B cell (primary cell): ENCODE measurements at regions of chr10 and their contacts with region 1.

Region 1: GRCh38 chr10:80444646-80445319 is 9.3 kb upstream of the TSPAN14 start:
- DNase-seq: peak; percentile 80
- ATAC-seq: peak; percentile 88
- H3K4me3 ChIP-seq: no peak overlapping the region
- H3K4me3 Mint-ChIP-seq: no peak overlapping the region
- H3K27ac ChIP-seq: no peak overlapping the region
- H3K27ac Mint-ChIP-seq: no peak overlapping the region
- H3K4me1 ChIP-seq: peaks cover 0 to 6% of the 10 kb centered on the region in 2 donors
- H3K4me1 Mint-ChIP-seq: peaks cover 9% of the 10 kb centered on the region
- H3K27me3 ChIP-seq: no peaks in the 10 kb centered on the region
- H3K27me3 Mint-ChIP-seq: no peaks in the 10 kb centered on the region
- CTCF ChIP-seq: peak; percentile 58

Region 2: GRCh38 chr10:80421707-80422536 is 22.9 kb before region 1 on chr10:
- CTCF ChIA-PET with region 1: interaction called, 19 read pairs
- POLR2A ChIA-PET with region 1: no interaction called
- intact Hi-C with region 1: no loop called
- DNase-seq: peak; percentile 50
- ATAC-seq: peak; percentile 78
- H3K4me3 ChIP-seq: peak overlapping the region in 1 of 5 experiments; percentile 29
- H3K4me3 Mint-ChIP-seq: peak overlapping the region; percentile 15
- H3K27ac ChIP-seq: no peak overlapping the region
- H3K27ac Mint-ChIP-seq: peak overlapping the region; percentile 53
- H3K4me1 ChIP-seq: peaks cover 24 to 31% of the 10 kb centered on the region in 2 donors
- H3K4me1 Mint-ChIP-seq: peaks cover 30% of the 10 kb centered on the region
- H3K27me3 ChIP-seq: no peaks in the 10 kb centered on the region
- H3K27me3 Mint-ChIP-seq: no peaks in the 10 kb centered on the region
- CTCF ChIP-seq: no peak

Region 3: DNA sequence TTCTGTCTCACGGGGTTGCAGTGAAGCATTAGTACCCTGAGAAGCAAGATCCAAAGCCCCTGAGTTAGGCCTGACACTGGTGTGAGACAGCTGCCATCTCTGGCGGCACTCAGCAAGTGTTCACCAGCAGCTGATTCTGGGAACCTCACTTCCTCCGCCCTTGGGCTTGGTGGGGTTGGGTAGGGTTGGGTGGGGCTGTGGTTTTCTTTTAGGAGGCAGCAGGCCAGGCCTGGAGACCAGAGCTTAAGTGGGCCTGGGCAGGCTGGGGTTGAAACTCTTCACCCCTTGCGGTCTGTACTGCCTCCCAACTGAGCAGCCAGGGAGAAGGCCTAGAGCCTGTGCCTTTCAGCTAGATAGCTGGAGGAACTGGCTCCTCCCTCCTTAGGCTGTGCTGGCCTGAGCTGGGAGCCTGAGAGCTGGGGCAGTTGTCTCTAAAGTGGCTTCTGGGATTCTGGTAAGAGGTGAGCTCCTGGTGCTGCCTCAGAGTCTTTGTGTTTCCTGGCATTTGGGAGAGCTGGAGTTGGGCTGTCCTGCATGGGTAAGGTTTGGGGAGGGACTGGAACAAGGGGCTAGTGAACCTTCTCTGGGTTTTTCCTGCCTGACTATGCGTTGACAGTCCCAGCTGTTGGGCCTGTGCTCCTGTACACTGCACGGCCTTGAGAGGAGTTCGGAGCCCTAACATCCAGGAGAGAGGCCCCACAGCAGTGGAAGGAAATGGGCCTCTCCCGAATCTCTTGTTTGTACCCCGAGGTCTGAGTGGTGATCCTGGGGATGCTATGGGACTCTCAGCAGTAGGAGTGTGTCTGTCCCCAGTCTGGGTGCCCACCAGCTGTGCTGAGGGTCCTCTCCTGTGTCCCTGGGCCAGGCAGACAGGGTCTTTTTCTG is 14.5 kb after region 1 on chr10:
- CTCF ChIA-PET with region 1: interaction called, 26 read pairs
- POLR2A ChIA-PET with region 1: interaction called, 3 read pairs
- intact Hi-C with region 1: no loop called
- DNase-seq: peak; percentile 66
- ATAC-seq: peak; percentile 11
- H3K4me3 ChIP-seq: peak overlapping the region in 3 of 5 experiments; percentile 8 to 34 (median 12)
- H3K4me3 Mint-ChIP-seq: peak overlapping the region; percentile 68
- H3K27ac ChIP-seq: peak overlapping the region; percentile 48 to 58
- H3K27ac Mint-ChIP-seq: peak overlapping the region; percentile 90
- H3K4me1 ChIP-seq: peaks cover 85 to 94% of the 10 kb centered on the region in 2 donors
- H3K4me1 Mint-ChIP-seq: peaks cover 89% of the 10 kb centered on the region
- H3K27me3 ChIP-seq: no peaks in the 10 kb centered on the region
- H3K27me3 Mint-ChIP-seq: no peaks in the 10 kb centered on the region
- CTCF ChIP-seq: no peak

Region 4: DNA sequence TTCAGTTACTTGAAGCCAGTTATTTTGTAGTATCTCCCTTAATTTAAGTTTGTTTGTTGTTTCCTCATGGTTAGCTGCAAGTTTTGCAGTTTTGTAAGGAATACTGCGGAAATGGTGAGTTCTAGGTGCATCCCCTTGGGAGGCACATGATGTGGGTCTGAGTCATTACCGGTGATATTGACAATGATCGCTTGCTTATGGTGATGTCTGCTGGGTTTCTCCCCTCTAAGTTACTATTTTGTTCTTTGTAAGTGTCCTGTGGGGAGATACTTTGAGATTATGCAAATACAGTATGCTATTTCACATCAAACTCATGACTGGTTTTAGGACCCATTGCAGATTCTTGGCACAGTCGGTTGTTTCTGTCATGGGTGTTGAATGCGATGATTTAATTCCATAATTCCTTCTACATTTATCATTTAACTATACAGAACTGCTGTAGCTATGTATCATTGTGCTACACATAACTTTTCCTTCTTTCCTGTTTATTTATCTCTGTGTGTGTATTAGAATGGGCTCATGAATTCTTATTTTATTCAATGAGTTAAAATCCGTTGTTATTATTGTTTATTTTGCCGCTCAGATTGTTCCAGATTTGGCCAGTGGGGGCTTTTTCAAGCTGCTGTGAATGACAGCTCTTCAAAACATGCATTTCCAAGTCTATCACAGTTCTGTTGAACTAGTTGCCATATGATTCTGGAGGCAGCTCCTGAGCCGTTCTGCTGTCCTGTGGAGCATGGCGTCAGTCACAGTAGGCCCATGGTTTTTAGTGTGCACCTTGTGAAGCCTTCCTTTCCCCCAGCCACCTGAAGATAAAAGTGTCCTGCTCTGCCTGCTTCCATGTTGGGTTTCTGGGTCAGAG is 27.7 kb after region 1 on chr10:
- CTCF ChIA-PET with region 1: interaction called, 16 read pairs
- POLR2A ChIA-PET with region 1: interaction called, 8 read pairs
- intact Hi-C with region 1: no loop called
- DNase-seq: peak; percentile 63
- ATAC-seq: peak; percentile 88
- H3K4me3 ChIP-seq: no peak overlapping the region
- H3K4me3 Mint-ChIP-seq: peak overlapping the region; percentile 60
- H3K27ac ChIP-seq: peak overlapping the region; percentile 49 to 75
- H3K27ac Mint-ChIP-seq: peak overlapping the region; percentile 89
- H3K4me1 ChIP-seq: peaks cover 41 to 48% of the 10 kb centered on the region in 2 donors
- H3K4me1 Mint-ChIP-seq: peaks cover 61% of the 10 kb centered on the region
- H3K27me3 ChIP-seq: no peaks in the 10 kb centered on the region
- H3K27me3 Mint-ChIP-seq: no peaks in the 10 kb centered on the region
- CTCF ChIP-seq: no peak

Region 5: DNA sequence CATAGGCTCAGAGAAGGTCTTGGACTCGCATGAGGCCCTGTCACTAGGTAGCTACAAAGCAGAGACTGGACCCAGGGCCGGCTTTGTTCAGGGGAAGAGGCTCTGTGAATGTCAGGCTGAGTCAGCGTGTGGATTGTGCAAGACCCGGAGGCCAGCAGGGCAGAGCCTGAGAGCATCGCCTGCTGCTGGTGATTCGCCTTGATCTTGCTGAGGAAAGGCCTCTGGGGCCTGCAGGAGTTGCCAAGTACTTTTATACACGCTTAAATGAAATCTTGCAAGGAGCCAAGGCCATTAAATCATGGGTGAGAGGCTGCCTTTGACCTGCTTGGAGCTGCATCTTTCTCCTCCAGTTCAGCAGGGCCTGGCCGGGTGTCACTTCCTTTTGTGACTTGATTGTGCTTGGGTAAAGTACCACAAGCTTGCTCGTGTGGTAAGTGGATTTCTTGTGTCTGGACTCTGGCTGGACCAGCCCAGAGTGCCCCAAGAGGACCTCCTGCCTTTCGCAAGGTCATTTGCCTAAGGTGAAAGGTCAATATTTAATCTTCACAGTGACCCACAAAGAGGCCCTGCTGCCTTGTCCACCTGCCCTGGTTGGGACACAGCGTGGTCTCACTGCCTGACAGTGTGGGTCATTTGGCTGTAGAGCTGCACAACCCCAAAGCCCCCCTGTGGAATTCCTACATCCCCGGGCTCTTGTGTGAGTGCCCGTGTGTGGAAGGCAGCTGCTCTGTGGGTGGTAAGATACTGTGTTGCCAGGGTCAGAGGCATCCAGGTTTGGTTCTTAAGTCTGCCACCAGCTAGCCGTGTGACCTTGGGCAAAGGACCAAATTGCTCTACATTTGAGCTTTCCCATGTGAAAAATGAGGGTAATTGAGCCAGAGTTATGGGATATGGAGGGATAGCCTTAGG is 54.3 kb after region 1 on chr10:
- CTCF ChIA-PET with region 1: interaction called, 500 read pairs
- POLR2A ChIA-PET with region 1: no interaction called
- intact Hi-C with region 1: no loop called
- DNase-seq: peak; percentile 32
- ATAC-seq: no peak
- H3K4me3 ChIP-seq: no peak overlapping the region
- H3K4me3 Mint-ChIP-seq: peak overlapping the region; percentile 89
- H3K27ac ChIP-seq: peak overlapping the region; percentile 44 to 59
- H3K27ac Mint-ChIP-seq: peak overlapping the region; percentile 95
- H3K4me1 ChIP-seq: peaks cover 51 to 70% of the 10 kb centered on the region in 2 donors
- H3K4me1 Mint-ChIP-seq: peaks cover 69% of the 10 kb centered on the region
- H3K27me3 ChIP-seq: no peaks in the 10 kb centered on the region
- H3K27me3 Mint-ChIP-seq: no peaks in the 10 kb centered on the region
- CTCF ChIP-seq: no peak

Region 6: DNA sequence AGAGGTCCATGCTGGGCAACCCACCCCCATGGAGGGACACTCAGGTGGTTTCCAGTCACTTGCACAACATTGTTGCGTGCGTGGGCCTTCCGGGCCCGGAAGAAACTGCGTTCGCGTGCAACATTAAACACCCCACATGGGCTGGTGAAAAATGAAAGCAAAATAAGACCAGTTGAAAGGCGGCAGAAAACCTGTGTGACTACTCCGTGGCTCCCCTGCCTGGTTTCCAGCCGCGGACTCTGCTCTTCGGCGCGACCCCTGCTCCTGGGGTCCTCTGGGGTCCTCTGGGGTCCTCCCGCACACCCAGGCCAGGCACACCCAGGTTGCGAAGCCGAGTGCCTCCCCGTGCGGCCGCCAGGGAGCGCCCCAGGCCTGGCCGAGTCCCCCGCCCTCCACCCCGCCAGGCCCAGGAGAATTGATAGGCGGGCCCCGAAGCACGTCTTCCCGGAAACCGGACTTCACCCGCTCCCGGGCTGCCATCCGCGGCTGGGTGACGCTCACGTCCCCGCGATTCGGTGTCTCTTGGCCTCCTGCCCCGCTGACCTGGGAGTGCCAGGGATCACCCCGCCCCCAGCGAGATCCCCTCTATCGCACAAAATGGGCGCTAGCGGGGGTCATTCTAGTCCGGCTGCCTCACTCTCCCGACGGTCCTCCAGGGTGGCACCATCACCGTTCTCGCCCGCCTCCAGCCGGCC is 91.0 kb after region 1 on chr10:
- CTCF ChIA-PET with region 1: interaction called, 13 read pairs
- POLR2A ChIA-PET with region 1: no interaction called
- intact Hi-C with region 1: no loop called
- DNase-seq: peak; percentile 84
- ATAC-seq: peak; percentile 87
- H3K4me3 ChIP-seq: peak overlapping the region; percentile 57 to 75 (median 63)
- H3K4me3 Mint-ChIP-seq: peak overlapping the region; percentile 90
- H3K27ac ChIP-seq: peak overlapping the region; percentile 76 to 79
- H3K27ac Mint-ChIP-seq: peak overlapping the region; percentile 94
- H3K4me1 ChIP-seq: peaks cover 19 to 38% of the 10 kb centered on the region in 2 donors
- H3K4me1 Mint-ChIP-seq: peaks cover 35% of the 10 kb centered on the region
- H3K27me3 ChIP-seq: no peaks in the 10 kb centered on the region
- H3K27me3 Mint-ChIP-seq: peaks cover 4% of the 10 kb centered on the region
- CTCF ChIP-seq: peak; percentile 87